SK-N-SH (cell line): ENCODE measurements at regions of chr19 and their contacts with region 1.

Region 1: GRCh38 chr19:41795031-41795461 is 1.3 kb upstream of the CEACAM3 start:
- DNase-seq: peak; percentile 35
- H3K4me3 ChIP-seq: peak overlapping the region in 1 of 2 experiments; percentile 5; a peak in 1 of 4 replicates
- H3K27ac ChIP-seq: no peak overlapping the region
- H3K4me1 ChIP-seq: no peaks in the 10 kb centered on the region
- H3K27me3 ChIP-seq: peaks cover 42% of the 10 kb centered on the region; the same call in 1 of the 2 replicates
- CTCF ChIP-seq: peak; percentile 86
- EP300 ChIP-seq: no peak
- RAD21 ChIP-seq: peak; percentile 17; the same call in 1 of the 2 replicates

Region 2: GRCh38 chr19:41753936-41754529 is 41.0 kb before region 1 on chr19:
- CTCF ChIA-PET with region 1: interaction called, 33 read pairs
- POLR2A ChIA-PET with region 1: no interaction called
- DNase-seq: peak; percentile 49
- H3K4me3 ChIP-seq: peak overlapping the region in 1 of 2 experiments; percentile 12; a peak in 1 of 4 replicates
- H3K27ac ChIP-seq: no peak overlapping the region
- H3K4me1 ChIP-seq: no peaks in the 10 kb centered on the region
- H3K27me3 ChIP-seq: peaks cover 17% of the 10 kb centered on the region; the same call in 1 of the 2 replicates
- CTCF ChIP-seq: peak; percentile 76
- EP300 ChIP-seq: no peak
- RAD21 ChIP-seq: 0 out of 2 replicates have a peak, but pooled peaks have one; percentile 15

Region 3: DNA sequence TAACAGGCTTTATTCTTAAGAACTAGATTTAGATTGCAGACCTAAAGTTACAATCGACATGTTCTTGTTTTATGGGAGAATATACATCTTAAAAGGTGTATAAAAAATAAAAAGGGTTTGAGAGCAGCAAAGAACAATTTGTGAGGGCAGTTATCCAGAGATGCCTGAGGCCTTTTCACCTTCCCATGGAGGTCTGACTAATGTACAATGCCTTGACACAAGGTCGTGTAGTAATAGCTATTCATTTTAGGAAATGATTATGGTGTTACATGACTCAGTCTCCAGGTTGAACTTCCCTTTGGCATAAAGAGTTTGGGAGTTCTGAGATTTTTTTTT is 19.7 kb before region 1 on chr19:
- CTCF ChIA-PET with region 1: interaction called, 21 read pairs
- POLR2A ChIA-PET with region 1: no interaction called
- DNase-seq: no peak
- H3K4me3 ChIP-seq: no peak overlapping the region
- H3K27ac ChIP-seq: no peak overlapping the region
- H3K4me1 ChIP-seq: no peaks in the 10 kb centered on the region
- H3K27me3 ChIP-seq: peaks cover 40% of the 10 kb centered on the region
- CTCF ChIP-seq: no peak
- EP300 ChIP-seq: no peak
- RAD21 ChIP-seq: no peak

Region 4: DNA sequence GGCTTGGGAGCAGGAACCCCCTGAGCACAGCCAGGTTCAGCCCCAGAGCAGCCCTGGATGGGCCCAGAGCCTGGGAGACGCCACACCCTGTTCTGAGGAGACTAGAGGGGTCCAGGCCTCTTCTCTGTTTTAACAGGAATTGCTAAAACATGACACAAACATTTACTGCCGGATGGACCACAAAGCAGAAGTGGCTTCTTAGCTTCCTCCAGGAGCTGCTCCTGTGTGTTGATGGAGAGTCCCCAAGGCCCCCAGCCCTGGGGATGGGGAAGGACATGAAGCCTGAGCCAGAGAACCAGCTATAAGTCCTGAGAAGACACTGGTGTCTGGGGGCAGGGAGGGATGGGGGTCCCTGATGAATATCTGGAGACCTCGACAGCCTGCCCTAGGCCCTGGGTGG is 16.0 kb after region 1 on chr19:
- CTCF ChIA-PET with region 1: interaction called, 16 read pairs
- POLR2A ChIA-PET with region 1: no interaction called
- DNase-seq: no peak
- H3K4me3 ChIP-seq: no peak overlapping the region
- H3K27ac ChIP-seq: no peak overlapping the region
- H3K4me1 ChIP-seq: no peaks in the 10 kb centered on the region
- H3K27me3 ChIP-seq: peaks cover 12% of the 10 kb centered on the region; the same call in 1 of the 2 replicates
- CTCF ChIP-seq: no peak
- EP300 ChIP-seq: no peak
- RAD21 ChIP-seq: no peak

Region 5: DNA sequence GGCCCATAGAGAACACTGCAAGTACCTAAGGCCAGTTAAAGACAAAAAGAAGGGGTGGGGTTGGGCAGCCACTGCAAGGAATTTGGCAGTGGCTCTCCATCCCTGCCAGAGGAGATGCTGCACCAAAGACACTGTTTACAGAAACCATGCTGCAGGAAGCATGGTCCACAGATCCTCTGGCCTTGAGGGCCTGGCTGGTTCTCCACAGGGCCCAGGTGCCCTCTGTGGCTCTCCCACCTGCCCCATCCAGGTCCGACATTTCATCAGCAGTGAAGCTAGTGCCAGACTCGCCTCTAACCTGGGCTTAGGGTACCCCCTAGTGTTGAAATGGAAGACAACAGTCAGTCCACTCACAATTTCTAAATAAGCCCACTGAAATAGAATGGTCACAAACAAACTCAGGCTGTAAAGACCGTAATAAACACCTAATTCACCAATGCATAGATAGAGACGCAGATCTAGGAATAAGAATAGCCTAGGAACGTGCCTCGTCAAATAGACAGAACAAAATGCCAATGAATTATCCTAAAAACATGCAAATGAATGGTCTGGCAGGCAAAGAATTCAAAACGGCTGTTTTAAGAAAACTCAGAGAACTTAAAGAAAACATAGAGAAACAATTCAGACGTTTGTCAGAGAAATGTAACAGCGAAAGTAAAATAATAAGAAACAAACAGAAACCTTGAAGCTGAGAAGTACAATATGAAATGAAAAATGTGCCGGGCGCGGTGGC is 26.1 kb after region 1 on chr19:
- CTCF ChIA-PET with region 1: interaction called, 24 read pairs
- POLR2A ChIA-PET with region 1: no interaction called
- DNase-seq: peak; percentile 70
- H3K4me3 ChIP-seq: no peak overlapping the region
- H3K27ac ChIP-seq: no peak overlapping the region
- H3K4me1 ChIP-seq: no peaks in the 10 kb centered on the region
- H3K27me3 ChIP-seq: peaks cover 38% of the 10 kb centered on the region; the same call in 1 of the 2 replicates
- CTCF ChIP-seq: peak; percentile 63
- EP300 ChIP-seq: no peak
- RAD21 ChIP-seq: peak; percentile 76